ENCODE measurements at regions of chr9 and their contacts with region 1.

Region 1: GRCh38 chr9:107282753-107283625 is at the start of gene RAD23B:
- ATAC-seq: peak; percentile 88 to 94 (median 92)
- H3K4me3 ChIP-seq: peak within 1 kb of the TSS; percentile 78 to 91 (median 86)
- H3K27ac ChIP-seq: peak within 1 kb of the TSS; percentile 98 to 99
- H3K4me1 ChIP-seq: peaks cover 9 to 11% of the 10 kb centered on the region in 2 donors
- total RNA-seq, gene RAD23B: 75.3 to 181 (median 109) TPM

Region 2: GRCh38 chr9:107131108-107131852 is 151.7 kb before region 1 on chr9:
- in situ Hi-C with region 1: no loop called
- ATAC-seq: no peak
- H3K4me3 ChIP-seq: no peak overlapping the region
- H3K27ac ChIP-seq: no peak overlapping the region
- H3K4me1 ChIP-seq: no peaks in the 10 kb centered on the region

Region 3: GRCh38 chr9:107176436-107177151 is 106.4 kb before region 1 on chr9:
- in situ Hi-C with region 1: loop called in 1 of 9 experiments (anchors 25 kb)
- ATAC-seq: peak in 7 of 8 experiments; percentile 31 to 88 (median 83)
- H3K4me3 ChIP-seq: peak overlapping the region in 1 of 5 donors; percentile 5
- H3K27ac ChIP-seq: peak overlapping the region; percentile 82 to 87
- H3K4me1 ChIP-seq: peaks cover 51 to 57% of the 10 kb centered on the region in 2 donors

Region 4: GRCh38 chr9:107605041-107605440 is 322.1 kb after region 1 on chr9:
- in situ Hi-C with region 1: no loop called
- ATAC-seq: no peak
- H3K4me3 ChIP-seq: no peak overlapping the region
- H3K27ac ChIP-seq: no peak overlapping the region
- H3K4me1 ChIP-seq: no peaks in the 10 kb centered on the region

Measured in motor neuron (in vitro differentiated cells).